Common myeloid progenitor, CD34-positive (primary cell): ENCODE measurements at regions of chr4 and their contacts with region 1.

Region 1: GRCh38 chr4:139177868-139178611 is 1.0 kb upstream of the ELF2 start:
- DNase-seq: peak; percentile 94 to 97 (median 97)
- H3K4me3 ChIP-seq: peak overlapping the region; percentile 82 to 99 (median 93)
- H3K27ac ChIP-seq: peak overlapping the region; percentile 80 to 93
- H3K4me1 ChIP-seq: peaks cover 12 to 26% (median 21%) of the 10 kb centered on the region in 4 experiments
- H3K27me3 ChIP-seq: no peaks in the 10 kb centered on the region

Region 2: DNA sequence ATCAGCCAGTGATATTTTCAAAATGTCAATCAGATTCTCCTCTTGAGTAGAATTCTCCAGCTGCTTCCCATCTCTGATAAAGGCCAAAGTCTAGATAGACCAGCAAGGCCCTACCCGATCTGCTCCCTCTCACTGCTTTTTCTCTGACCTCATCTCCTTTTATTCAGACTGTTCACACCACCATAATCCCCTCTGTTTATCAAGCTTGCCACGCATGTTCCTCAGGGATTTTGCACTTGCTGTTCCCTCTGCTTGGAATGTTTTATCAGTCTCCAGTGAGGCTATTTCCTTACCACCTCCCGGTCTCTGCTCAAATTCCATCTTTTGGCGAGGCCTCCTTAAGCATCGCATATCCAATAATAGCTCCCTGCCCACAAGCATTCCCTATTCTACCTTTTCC is 142.4 kb before region 1 on chr4:
- CTCF ChIA-PET with region 1: no interaction called
- POLR2A ChIA-PET with region 1: no interaction called
- DNase-seq: no peak
- H3K4me3 ChIP-seq: no peak overlapping the region
- H3K27ac ChIP-seq: no peak overlapping the region
- H3K4me1 ChIP-seq: peaks cover under 1 to 7% (median 4%) of the 10 kb centered on the region in 4 experiments
- H3K27me3 ChIP-seq: no peaks in the 10 kb centered on the region

Region 3: DNA sequence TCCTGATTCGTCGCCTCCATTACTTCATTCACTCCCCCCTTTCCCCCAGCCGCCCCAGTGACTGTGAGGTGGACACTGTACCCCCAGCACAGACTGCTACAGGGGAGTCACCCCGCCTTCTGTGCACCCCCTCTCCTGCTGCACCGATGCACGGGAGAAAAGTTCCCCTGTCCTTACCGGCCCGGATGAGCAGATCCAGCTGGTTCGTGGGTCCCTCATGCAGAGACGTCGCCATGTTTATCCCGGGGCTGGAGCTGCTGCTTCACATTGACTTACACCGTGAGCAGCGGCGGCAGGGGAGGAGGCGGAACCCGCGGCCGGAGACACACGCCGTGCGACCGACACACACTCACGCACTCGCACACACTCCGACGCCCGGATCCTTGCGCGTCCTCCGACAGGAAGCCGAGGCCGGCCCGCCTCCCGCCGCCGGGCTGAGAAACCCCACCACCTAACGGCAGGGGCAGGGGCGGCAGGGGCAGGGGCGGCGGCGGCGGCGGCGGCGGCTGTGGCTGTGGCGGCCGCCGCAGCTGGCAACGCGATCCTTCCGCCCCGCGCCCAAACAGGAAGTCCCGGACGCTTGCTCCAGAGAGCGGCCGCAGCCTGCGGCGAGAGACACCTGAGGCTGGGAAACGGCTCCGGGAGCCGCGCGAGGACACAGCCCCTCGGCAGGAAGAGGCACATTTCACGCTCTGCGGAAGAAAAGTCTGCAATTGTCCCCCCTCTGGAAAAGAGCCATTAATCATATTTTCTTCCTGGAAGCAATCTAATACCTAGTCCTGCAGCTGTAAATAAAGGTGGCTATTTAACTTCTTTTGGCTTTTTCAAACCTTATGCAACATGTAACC is 93.9 kb before region 1 on chr4:
- CTCF ChIA-PET with region 1: interaction called, 3 read pairs
- POLR2A ChIA-PET with region 1: interaction called, 12 read pairs
- DNase-seq: peak; percentile 94 to 98 (median 96)
- H3K4me3 ChIP-seq: peak overlapping the region; percentile 56 to 100 (median 93)
- H3K27ac ChIP-seq: peak overlapping the region; percentile 78 to 94
- H3K4me1 ChIP-seq: peaks cover 15 to 47% (median 30%) of the 10 kb centered on the region in 4 experiments
- H3K27me3 ChIP-seq: no peaks in the 10 kb centered on the region

Region 4: DNA sequence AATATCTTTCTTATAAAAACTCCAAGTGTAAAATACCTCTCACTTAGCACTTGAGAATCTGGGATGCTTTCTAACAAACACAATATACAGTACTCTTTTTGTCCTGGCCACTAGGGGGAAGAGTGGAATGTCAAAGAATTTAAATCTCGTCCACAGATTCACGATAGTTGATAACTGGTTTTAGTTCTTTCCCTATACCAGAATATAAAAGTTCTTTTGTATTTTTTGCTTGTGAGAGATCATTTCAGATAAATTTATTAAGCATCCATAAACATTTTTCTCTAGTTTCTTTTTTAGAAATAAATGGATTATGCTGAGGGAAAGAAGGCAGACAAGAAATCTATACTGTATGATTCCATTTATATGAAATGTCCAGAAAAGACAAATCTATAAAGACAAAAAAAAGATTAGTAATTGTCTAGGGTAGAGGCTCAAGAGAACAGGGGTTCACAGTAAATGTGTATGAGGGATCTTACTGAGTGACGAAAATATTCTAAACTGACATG is 51.5 kb after region 1 on chr4:
- CTCF ChIA-PET with region 1: interaction called, 17 read pairs
- POLR2A ChIA-PET with region 1: interaction called, 3 read pairs
- DNase-seq: peak; percentile 48 to 72 (median 71)
- H3K4me3 ChIP-seq: no peak overlapping the region
- H3K27ac ChIP-seq: no peak overlapping the region
- H3K4me1 ChIP-seq: peaks cover 0 to 8% (median 0%) of the 10 kb centered on the region in 4 experiments
- H3K27me3 ChIP-seq: no peaks in the 10 kb centered on the region

Region 5: GRCh38 chr4:139295206-139295941 is 117.3 kb after region 1 on chr4:
- CTCF ChIA-PET with region 1: interaction called, 12 read pairs
- POLR2A ChIA-PET with region 1: interaction called, 15 read pairs
- DNase-seq: peak; percentile 94 to 97 (median 96)
- H3K4me3 ChIP-seq: peak overlapping the region; percentile 81 to 97 (median 88)
- H3K27ac ChIP-seq: peak overlapping the region; percentile 89 to 91
- H3K4me1 ChIP-seq: peaks cover 5 to 24% (median 16%) of the 10 kb centered on the region in 4 experiments
- H3K27me3 ChIP-seq: no peaks in the 10 kb centered on the region